ENCODE measurements at regions of chr9 and their contacts with region 1.

Region 1: DNA sequence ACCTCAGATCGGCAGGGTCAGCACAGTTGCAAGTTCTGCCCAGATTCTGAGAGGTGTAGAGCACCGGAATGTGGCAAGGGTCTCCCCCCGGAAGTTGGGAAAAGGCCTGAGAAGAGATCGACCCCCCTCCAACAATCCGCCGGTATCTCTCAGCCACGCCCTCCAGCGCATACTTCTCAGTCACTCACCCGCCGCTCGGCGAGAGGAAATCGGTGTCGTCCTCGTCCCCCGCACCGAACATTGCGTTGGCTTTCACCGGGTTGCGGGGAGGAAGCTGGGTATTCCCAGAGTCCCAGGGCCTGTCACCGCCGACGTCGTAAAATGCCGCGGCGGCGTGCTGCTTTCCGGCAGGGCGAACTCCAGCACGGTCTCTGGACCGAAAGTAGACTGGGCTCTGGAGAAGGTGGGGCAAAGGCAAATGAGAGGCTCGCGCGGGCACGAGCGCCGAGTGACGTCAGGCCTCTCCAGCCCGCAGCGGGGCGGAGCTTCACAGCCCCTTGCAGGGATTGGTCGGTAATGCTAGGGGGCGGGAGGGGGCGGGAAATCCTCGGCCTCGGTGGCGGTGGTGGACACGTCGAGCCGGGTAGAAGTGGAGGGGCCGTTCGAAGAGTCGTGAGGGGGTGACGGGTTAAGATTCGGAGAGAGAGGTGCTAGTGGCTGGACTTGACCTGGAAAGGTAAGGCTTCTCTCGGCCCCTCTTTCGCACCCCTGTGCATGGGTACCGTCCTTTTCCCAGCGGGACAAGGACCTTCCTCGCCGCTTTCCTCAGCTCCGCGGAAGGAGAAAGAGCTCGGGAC is at the starts of genes FKBP15 and SLC31A1:
- DNase-seq: peak; percentile 90 to 99 (median 94)
- ATAC-seq: peak; percentile 98
- H3K4me3 ChIP-seq: peak within 1 kb of the TSS; percentile 90
- H3K4me3 Mint-ChIP-seq: peak within 1 kb of the TSS; percentile 99
- H3K27ac ChIP-seq: peak within 1 kb of the TSS; percentile 82 to 84
- H3K27ac Mint-ChIP-seq: peak within 1 kb of the TSS; percentile 88
- H3K4me1 ChIP-seq: peaks cover 23% of the 10 kb centered on the region
- H3K4me1 Mint-ChIP-seq: peaks cover 59% of the 10 kb centered on the region
- H3K27me3 ChIP-seq: no peaks in the 10 kb centered on the region
- H3K27me3 Mint-ChIP-seq: no peaks in the 10 kb centered on the region
- CTCF ChIP-seq: no peak
- total RNA-seq, gene FKBP15: 11.9 to 14.2 TPM
- total RNA-seq, gene SLC31A1: 12.1 to 12.3 TPM

Region 2: GRCh38 chr9:111483862-111484571 is 1737.2 kb before region 1 on chr9 and contains the start of gene ECPAS:
- CTCF ChIA-PET with region 1: no interaction called
- POLR2A ChIA-PET with region 1: no interaction called
- intact Hi-C with region 1: loop called in 1 of 2 experiments (anchors 5 kb)
- DNase-seq: peak; percentile 27 to 83 (median 48)
- ATAC-seq: peak; percentile 60
- H3K4me3 ChIP-seq: peak within 1 kb of the TSS; percentile 95
- H3K4me3 Mint-ChIP-seq: peak within 1 kb of the TSS; percentile 86
- H3K27ac ChIP-seq: peak within 1 kb of the TSS; percentile 62 to 78
- H3K27ac Mint-ChIP-seq: peak within 1 kb of the TSS; percentile 83
- H3K4me1 ChIP-seq: peaks cover 12% of the 10 kb centered on the region
- H3K4me1 Mint-ChIP-seq: peaks cover 26% of the 10 kb centered on the region
- H3K27me3 ChIP-seq: no peaks in the 10 kb centered on the region
- H3K27me3 Mint-ChIP-seq: no peaks in the 10 kb centered on the region
- CTCF ChIP-seq: no peak
- total RNA-seq, gene ECPAS: 36.6 to 37.5 TPM

Region 3: DNA sequence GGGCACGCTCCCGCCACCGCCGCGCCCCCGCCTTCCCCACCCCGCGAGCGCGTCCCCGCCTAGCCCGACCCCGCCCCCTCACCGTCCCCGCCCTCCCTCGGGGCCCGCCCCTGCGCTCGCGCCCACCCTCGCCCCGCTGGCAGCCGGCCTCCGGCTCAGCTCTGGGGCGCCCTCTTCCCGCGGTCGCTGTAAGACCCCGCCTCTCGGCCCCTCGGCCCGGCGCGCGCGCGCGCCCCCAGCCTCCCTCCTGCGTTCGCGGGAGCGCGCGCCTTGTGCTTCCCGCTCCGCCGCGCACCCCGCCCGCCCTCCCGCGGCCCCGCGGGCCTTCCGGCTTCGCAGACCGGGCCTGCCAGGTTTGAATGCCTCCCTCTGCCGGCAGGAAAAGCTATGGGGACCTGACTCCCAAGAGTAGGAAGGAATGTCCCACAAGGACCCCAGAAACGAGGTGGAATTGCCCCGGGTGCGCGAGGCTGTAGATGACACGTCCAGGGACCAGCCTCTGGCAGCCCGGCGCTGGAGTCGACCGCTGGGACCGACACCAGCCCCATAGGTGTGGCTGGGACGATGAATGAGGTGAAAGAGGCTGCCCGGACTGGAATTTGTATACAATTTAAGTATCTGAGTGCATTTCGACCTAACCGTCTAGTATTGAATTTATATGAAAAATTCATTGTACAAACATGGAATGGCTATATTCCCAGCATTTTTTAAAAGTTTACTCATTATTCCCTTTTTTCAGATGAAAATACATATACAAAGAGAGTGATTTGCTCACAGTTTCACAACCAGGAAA is 887.4 kb before region 1 on chr9:
- CTCF ChIA-PET with region 1: no interaction called
- POLR2A ChIA-PET with region 1: no interaction called
- intact Hi-C with region 1: loop called in 1 of 2 experiments (anchors 5 kb)
- DNase-seq: peak; percentile 85 to 98 (median 94)
- ATAC-seq: peak; percentile 80
- H3K4me3 ChIP-seq: peak overlapping the region; percentile 88
- H3K4me3 Mint-ChIP-seq: peak overlapping the region; percentile 90
- H3K27ac ChIP-seq: peak overlapping the region; percentile 91 to 92
- H3K27ac Mint-ChIP-seq: peak overlapping the region; percentile 88
- H3K4me1 ChIP-seq: peaks cover 7% of the 10 kb centered on the region
- H3K4me1 Mint-ChIP-seq: peaks cover 35% of the 10 kb centered on the region
- H3K27me3 ChIP-seq: no peaks in the 10 kb centered on the region
- H3K27me3 Mint-ChIP-seq: no peaks in the 10 kb centered on the region
- CTCF ChIP-seq: peak; percentile 49

Region 4: DNA sequence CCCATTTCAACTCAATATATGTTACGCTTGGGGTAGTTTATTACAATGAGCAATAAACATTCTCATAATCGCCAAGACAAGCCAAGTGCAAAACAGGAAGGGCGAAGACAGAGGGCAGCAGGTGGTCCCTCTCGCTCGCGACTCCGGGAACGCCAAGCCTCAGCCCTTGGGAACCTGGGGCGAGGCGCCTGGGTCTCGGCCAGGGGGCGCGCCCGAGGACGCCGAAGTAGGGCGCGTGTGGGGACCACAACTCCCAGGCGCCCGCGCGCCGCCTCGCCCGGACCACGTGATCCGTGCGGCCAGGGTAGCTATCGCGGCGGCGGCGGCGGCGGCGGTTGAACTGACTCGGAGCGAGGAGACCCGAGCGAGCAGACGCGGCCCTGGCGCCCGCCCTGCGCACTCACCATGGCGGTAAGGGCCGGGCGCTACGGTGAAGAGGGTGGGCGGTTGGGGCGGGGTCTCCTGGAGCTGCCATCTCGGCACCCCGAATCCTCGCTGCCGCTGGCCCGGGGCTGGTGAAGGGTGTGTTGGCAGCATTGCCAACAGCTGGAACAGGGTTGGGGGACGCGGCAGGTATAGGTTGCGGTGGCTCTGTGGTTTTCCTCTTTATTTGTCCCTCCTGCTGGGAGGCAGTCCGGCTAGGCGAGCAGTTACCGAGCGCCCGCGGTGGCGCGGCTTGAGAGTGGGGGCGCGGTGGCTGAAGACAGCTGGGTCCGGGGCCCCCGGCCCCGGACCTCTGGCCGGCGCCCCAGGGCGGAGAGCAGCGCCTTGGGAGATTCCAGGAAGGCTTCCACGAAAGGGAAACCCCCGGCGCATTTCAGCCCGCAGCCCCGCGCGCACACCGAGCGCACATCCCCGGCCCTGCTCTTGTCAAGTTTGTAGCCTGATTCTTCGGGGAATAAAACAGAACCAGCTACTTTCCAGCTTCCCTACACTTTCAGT is 70.3 kb before region 1 on chr9 and contains the start of gene SLC31A2:
- CTCF ChIA-PET with region 1: interaction called, 3 read pairs
- POLR2A ChIA-PET with region 1: interaction called, 11 read pairs
- intact Hi-C with region 1: loop called in 1 of 2 experiments (anchors 2 kb)
- DNase-seq: peak; percentile 68 to 92 (median 81)
- ATAC-seq: peak; percentile 95
- H3K4me3 ChIP-seq: peak within 1 kb of the TSS; percentile 90
- H3K4me3 Mint-ChIP-seq: peak within 1 kb of the TSS; percentile 88
- H3K27ac ChIP-seq: peak within 1 kb of the TSS; percentile 55 to 56
- H3K27ac Mint-ChIP-seq: peak within 1 kb of the TSS; percentile 53
- H3K4me1 ChIP-seq: peaks cover 25% of the 10 kb centered on the region
- H3K4me1 Mint-ChIP-seq: peaks cover 35% of the 10 kb centered on the region
- H3K27me3 ChIP-seq: peaks cover 2% of the 10 kb centered on the region in 2 experiments
- H3K27me3 Mint-ChIP-seq: peaks cover 6% of the 10 kb centered on the region
- CTCF ChIP-seq: peak; percentile 61
- total RNA-seq, gene SLC31A2: 4.8 to 5.4 TPM

Region 5: GRCh38 chr9:113231701-113232100 is 10.5 kb after region 1 on chr9:
- CTCF ChIA-PET with region 1: interaction called, 3 read pairs
- POLR2A ChIA-PET with region 1: interaction called, 12 read pairs
- intact Hi-C with region 1: no loop called
- DNase-seq: no peak
- ATAC-seq: no peak
- H3K4me3 ChIP-seq: no peak overlapping the region
- H3K4me3 Mint-ChIP-seq: no peak overlapping the region
- H3K27ac ChIP-seq: no peak overlapping the region
- H3K27ac Mint-ChIP-seq: peak overlapping the region; percentile 76
- H3K4me1 ChIP-seq: peaks cover 7% of the 10 kb centered on the region
- H3K4me1 Mint-ChIP-seq: peaks cover 34% of the 10 kb centered on the region
- H3K27me3 ChIP-seq: no peaks in the 10 kb centered on the region
- H3K27me3 Mint-ChIP-seq: no peaks in the 10 kb centered on the region
- CTCF ChIP-seq: no peak

Region 6: DNA sequence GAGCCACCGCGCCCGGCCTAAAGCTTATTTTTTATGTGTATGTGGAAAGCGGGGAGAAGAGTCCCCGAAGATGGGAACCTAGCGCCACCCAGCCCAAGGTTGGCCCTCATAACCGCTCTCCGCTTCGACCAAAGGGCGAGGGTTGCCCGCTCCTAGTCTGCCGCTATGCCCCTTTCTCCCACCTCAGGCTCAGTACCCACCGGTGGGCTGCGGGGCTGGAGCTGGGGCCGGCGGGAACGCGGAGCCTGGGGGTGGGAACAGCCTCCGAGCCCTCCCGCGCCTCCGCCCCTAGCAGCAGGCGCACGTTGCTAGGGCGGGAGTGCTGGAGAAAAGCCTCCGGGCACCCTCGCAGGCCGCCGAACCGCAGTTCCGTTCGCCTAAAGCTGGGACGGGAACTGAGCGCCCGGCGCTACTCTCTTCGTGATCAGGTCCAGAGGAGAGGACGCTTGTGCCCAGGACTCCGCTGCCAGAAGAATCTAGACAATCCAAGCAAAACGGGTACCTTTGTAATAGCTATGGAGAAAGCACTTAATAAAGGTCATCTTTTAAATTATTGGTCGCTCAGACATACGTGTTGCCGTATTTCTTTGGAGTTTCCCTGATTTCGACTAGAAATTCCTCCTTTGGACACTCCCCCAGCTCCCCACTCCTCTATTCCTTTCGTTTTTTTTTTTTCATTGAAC is 119.0 kb after region 1 on chr9 and contains the start of gene WDR31:
- CTCF ChIA-PET with region 1: no interaction called
- POLR2A ChIA-PET with region 1: no interaction called
- intact Hi-C with region 1: loop called in 1 of 2 experiments (anchors 5 kb)
- DNase-seq: peak; percentile 56 to 88 (median 74)
- ATAC-seq: peak; percentile 99
- H3K4me3 ChIP-seq: peak within 1 kb of the TSS; percentile 82
- H3K4me3 Mint-ChIP-seq: peak within 1 kb of the TSS; percentile 91
- H3K27ac ChIP-seq: no peak within 1 kb of the TSS
- H3K27ac Mint-ChIP-seq: peak within 1 kb of the TSS; percentile 14
- H3K4me1 ChIP-seq: peaks cover 18% of the 10 kb centered on the region
- H3K4me1 Mint-ChIP-seq: peaks cover 25% of the 10 kb centered on the region
- H3K27me3 ChIP-seq: no peaks in the 10 kb centered on the region
- H3K27me3 Mint-ChIP-seq: peaks cover 11% of the 10 kb centered on the region
- CTCF ChIP-seq: no peak
- total RNA-seq, gene WDR31: 0.14 to 0.22 TPM

Region 7: GRCh38 chr9:113410207-113410864 is 189.1 kb after region 1 on chr9 and contains the starts of genes C9orf43 and POLE3:
- CTCF ChIA-PET with region 1: no interaction called
- POLR2A ChIA-PET with region 1: interaction called, 16 read pairs
- intact Hi-C with region 1: loop called in 1 of 2 experiments (anchors 2 kb)
- DNase-seq: peak; percentile 89 to 97 (median 92)
- ATAC-seq: peak; percentile 83
- H3K4me3 ChIP-seq: peak within 1 kb of the TSS; percentile 83
- H3K4me3 Mint-ChIP-seq: peak within 1 kb of the TSS; percentile 99
- H3K27ac ChIP-seq: peak within 1 kb of the TSS; percentile 74 to 94
- H3K27ac Mint-ChIP-seq: peak within 1 kb of the TSS; percentile 94
- H3K4me1 ChIP-seq: peaks cover 19% of the 10 kb centered on the region
- H3K4me1 Mint-ChIP-seq: peaks cover 37% of the 10 kb centered on the region
- H3K27me3 ChIP-seq: no peaks in the 10 kb centered on the region
- H3K27me3 Mint-ChIP-seq: no peaks in the 10 kb centered on the region
- CTCF ChIP-seq: no peak
- total RNA-seq, gene C9orf43: 0.60 to 0.95 TPM
- total RNA-seq, gene POLE3: 63.6 to 64.9 TPM